ENCODE measurements at regions of chr19 and their contacts with region 1.

Region 1: DNA sequence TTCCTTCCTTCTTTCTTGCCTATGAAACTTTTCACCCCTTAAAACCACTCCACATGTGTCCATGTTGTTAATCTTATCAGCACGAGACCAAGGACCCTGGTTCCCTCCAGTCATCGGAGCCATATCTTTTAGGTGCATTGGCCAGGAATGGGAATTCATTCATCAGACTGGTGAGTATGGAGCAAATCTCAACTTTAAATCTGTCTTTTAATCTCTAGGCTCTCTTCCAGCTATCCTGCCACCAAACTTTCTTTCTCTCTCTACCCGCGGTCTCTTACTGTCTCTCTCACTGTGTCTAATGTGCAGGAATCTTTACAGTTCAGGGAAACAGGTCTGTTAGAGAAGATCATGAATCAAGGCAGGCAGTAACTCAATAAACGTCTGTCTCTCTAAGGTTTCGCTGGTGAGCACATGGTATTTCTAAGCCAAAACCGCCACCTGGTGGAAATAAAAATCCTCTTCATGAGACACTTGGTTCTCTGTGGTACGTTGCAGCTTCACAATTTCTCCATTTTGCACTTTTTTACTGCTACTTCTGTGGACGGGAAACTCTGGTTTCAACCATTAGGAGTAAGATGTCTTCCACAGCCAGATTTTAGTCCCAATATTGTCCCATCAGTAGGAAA is 16.1 kb downstream of the LGALS16 start:
- DNase-seq: peak; percentile 66
- H3K4me3 Mint-ChIP-seq: no peak overlapping the region
- H3K27ac Mint-ChIP-seq: no peak overlapping the region
- H3K4me1 Mint-ChIP-seq: peaks cover 6% of the 10 kb centered on the region
- H3K27me3 Mint-ChIP-seq: peaks cover 45% of the 10 kb centered on the region
- CTCF ChIP-seq: peak; percentile 43

Region 2: GRCh38 chr19:39539519-39540332 is 132.1 kb before region 1 on chr19 and contains the start of gene EID2:
- CTCF ChIA-PET with region 1: interaction called, 10 read pairs
- POLR2A ChIA-PET with region 1: no interaction called
- intact Hi-C with region 1: no loop called
- DNase-seq: peak; percentile 93
- H3K4me3 Mint-ChIP-seq: peak within 1 kb of the TSS; percentile 79
- H3K27ac Mint-ChIP-seq: no peak within 1 kb of the TSS
- H3K4me1 Mint-ChIP-seq: peaks cover 14% of the 10 kb centered on the region
- H3K27me3 Mint-ChIP-seq: no peaks in the 10 kb centered on the region
- CTCF ChIP-seq: peak; percentile 68
- total RNA-seq, gene EID2: 8.5 and 10.4 TPM in 2 replicates

Region 3: GRCh38 chr19:39546599-39546998 is 125.3 kb before region 1 on chr19:
- CTCF ChIA-PET with region 1: interaction called, 77 read pairs
- POLR2A ChIA-PET with region 1: interaction called, 3 read pairs
- intact Hi-C with region 1: loop called (anchors 1 kb)
- DNase-seq: peak; percentile 7
- H3K4me3 Mint-ChIP-seq: no peak overlapping the region
- H3K27ac Mint-ChIP-seq: no peak overlapping the region
- H3K4me1 Mint-ChIP-seq: no peaks in the 10 kb centered on the region
- H3K27me3 Mint-ChIP-seq: no peaks in the 10 kb centered on the region
- CTCF ChIP-seq: no peak

Region 4: GRCh38 chr19:39557441-39558151 is 114.3 kb before region 1 on chr19:
- CTCF ChIA-PET with region 1: interaction called, 77 read pairs
- POLR2A ChIA-PET with region 1: interaction called, 3 read pairs
- intact Hi-C with region 1: no loop called
- DNase-seq: peak; percentile 20
- H3K4me3 Mint-ChIP-seq: no peak overlapping the region
- H3K27ac Mint-ChIP-seq: no peak overlapping the region
- H3K4me1 Mint-ChIP-seq: peaks cover 6% of the 10 kb centered on the region
- H3K27me3 Mint-ChIP-seq: peaks cover 56% of the 10 kb centered on the region
- CTCF ChIP-seq: no peak

Measured in MCF 10A (cell line).